ENCODE measurements at regions of chr12 and their contacts with region 1.

Region 1: DNA sequence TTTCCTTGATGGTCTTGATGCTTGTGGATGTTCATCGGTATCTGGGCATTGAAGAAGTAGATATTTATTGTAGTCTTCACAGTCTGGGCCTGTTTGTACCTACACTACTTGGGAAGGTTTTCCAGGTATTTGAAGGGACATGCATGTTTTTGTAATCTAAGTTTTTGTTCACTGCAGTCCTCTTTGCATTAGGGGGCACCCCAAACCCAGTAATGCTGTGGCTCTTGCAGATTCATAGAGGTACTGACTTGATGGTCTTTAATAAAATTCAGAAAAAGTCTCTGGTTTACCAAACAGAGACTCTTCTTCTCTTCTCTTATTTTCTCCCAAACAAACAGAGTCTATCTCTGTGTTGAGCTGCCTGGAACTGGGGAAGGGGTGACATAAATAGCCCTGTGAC is 150.9 kb upstream of the SLC16A7 start:
- DNase-seq: no peak
- H3K4me3 ChIP-seq: no peak overlapping the region
- H3K4me3 Mint-ChIP-seq: no peak overlapping the region
- H3K27ac Mint-ChIP-seq: no peak overlapping the region
- H3K4me1 ChIP-seq: peaks cover 32% of the 10 kb centered on the region
- H3K4me1 Mint-ChIP-seq: peaks cover 24% of the 10 kb centered on the region
- H3K27me3 ChIP-seq: no peaks in the 10 kb centered on the region
- H3K27me3 Mint-ChIP-seq: no peaks in the 10 kb centered on the region
- CTCF ChIP-seq: no peak

Region 2: GRCh38 chr12:59322473-59322872 is 122.5 kb before region 1 on chr12:
- CTCF ChIA-PET with region 1: no interaction called
- POLR2A ChIA-PET with region 1: no interaction called
- intact Hi-C with region 1: no loop called
- DNase-seq: no peak
- H3K4me3 ChIP-seq: no peak overlapping the region
- H3K4me3 Mint-ChIP-seq: no peak overlapping the region
- H3K27ac Mint-ChIP-seq: no peak overlapping the region
- H3K4me1 ChIP-seq: no peaks in the 10 kb centered on the region
- H3K4me1 Mint-ChIP-seq: no peaks in the 10 kb centered on the region
- H3K27me3 ChIP-seq: no peaks in the 10 kb centered on the region
- H3K27me3 Mint-ChIP-seq: no peaks in the 10 kb centered on the region
- CTCF ChIP-seq: no peak

Region 3: GRCh38 chr12:59431266-59431665 is 13.7 kb before region 1 on chr12:
- CTCF ChIA-PET with region 1: no interaction called
- POLR2A ChIA-PET with region 1: no interaction called
- intact Hi-C with region 1: loop called (anchors 1 kb)
- DNase-seq: no peak
- H3K4me3 ChIP-seq: no peak overlapping the region
- H3K4me3 Mint-ChIP-seq: no peak overlapping the region
- H3K27ac Mint-ChIP-seq: no peak overlapping the region
- H3K4me1 ChIP-seq: 0 out of 2 replicates have a peak, but pooled peaks cover 11% of the 10 kb centered on the region
- H3K4me1 Mint-ChIP-seq: no peaks in the 10 kb centered on the region
- H3K27me3 ChIP-seq: no peaks in the 10 kb centered on the region
- H3K27me3 Mint-ChIP-seq: no peaks in the 10 kb centered on the region
- CTCF ChIP-seq: no peak

Region 4: GRCh38 chr12:59517522-59517921 is 72.6 kb after region 1 on chr12:
- CTCF ChIA-PET with region 1: no interaction called
- POLR2A ChIA-PET with region 1: no interaction called
- intact Hi-C with region 1: loop called (anchors 5 kb)
- DNase-seq: no peak
- H3K4me3 ChIP-seq: no peak overlapping the region
- H3K4me3 Mint-ChIP-seq: no peak overlapping the region
- H3K27ac Mint-ChIP-seq: no peak overlapping the region
- H3K4me1 ChIP-seq: no peaks in the 10 kb centered on the region
- H3K4me1 Mint-ChIP-seq: no peaks in the 10 kb centered on the region
- H3K27me3 ChIP-seq: no peaks in the 10 kb centered on the region
- H3K27me3 Mint-ChIP-seq: no peaks in the 10 kb centered on the region
- CTCF ChIP-seq: no peak

Region 5: GRCh38 chr12:59660148-59660547 is 215.2 kb after region 1 on chr12:
- CTCF ChIA-PET with region 1: no interaction called
- POLR2A ChIA-PET with region 1: no interaction called
- intact Hi-C with region 1: loop called (anchors 5 kb)
- DNase-seq: no peak
- H3K4me3 ChIP-seq: no peak overlapping the region
- H3K4me3 Mint-ChIP-seq: no peak overlapping the region
- H3K27ac Mint-ChIP-seq: no peak overlapping the region
- H3K4me1 ChIP-seq: no peaks in the 10 kb centered on the region
- H3K4me1 Mint-ChIP-seq: no peaks in the 10 kb centered on the region
- H3K27me3 ChIP-seq: no peaks in the 10 kb centered on the region
- H3K27me3 Mint-ChIP-seq: peaks cover 2% of the 10 kb centered on the region
- CTCF ChIP-seq: no peak

Region 6: DNA sequence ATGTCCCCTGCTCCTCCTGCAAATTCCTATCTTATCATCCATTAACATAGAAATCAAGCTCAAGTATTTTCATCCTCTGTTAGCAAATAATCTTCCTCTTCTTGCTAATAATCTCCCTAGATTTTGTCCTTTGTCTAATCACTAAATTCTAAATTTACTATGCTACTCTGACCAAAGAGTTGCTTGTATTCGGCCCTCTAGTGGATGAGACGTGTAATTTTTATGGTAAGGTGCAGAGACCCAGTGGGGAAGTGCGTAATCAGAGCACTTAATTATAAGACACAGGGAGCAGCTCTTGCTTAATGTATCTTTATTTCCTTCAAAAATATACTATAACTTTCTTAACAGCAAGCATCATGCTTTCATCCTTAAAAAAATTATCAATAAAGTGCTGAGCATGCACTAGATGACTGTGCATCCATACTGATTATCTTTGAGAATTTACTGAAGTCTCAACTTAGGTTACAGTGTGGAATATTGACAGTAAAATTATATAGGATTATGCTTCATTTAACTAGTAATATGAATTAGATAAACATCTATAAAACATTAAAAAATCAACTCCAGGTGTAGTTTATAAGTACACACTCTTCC is 363.5 kb after region 1 on chr12:
- CTCF ChIA-PET with region 1: no interaction called
- POLR2A ChIA-PET with region 1: no interaction called
- intact Hi-C with region 1: loop called (anchors 5 kb)
- DNase-seq: peak in 1 of 2 experiments; percentile 17
- H3K4me3 ChIP-seq: no peak overlapping the region
- H3K4me3 Mint-ChIP-seq: no peak overlapping the region
- H3K27ac Mint-ChIP-seq: no peak overlapping the region
- H3K4me1 ChIP-seq: no peaks in the 10 kb centered on the region; the same call in 1 of the 2 replicates
- H3K4me1 Mint-ChIP-seq: no peaks in the 10 kb centered on the region
- H3K27me3 ChIP-seq: no peaks in the 10 kb centered on the region
- H3K27me3 Mint-ChIP-seq: peaks cover 2% of the 10 kb centered on the region
- CTCF ChIP-seq: peak; percentile 67 to 73

Measured in Caco-2 (cell line).